MCF 10A (cell line): ENCODE measurements at regions of chr3 and their contacts with region 1.

Region 1: DNA sequence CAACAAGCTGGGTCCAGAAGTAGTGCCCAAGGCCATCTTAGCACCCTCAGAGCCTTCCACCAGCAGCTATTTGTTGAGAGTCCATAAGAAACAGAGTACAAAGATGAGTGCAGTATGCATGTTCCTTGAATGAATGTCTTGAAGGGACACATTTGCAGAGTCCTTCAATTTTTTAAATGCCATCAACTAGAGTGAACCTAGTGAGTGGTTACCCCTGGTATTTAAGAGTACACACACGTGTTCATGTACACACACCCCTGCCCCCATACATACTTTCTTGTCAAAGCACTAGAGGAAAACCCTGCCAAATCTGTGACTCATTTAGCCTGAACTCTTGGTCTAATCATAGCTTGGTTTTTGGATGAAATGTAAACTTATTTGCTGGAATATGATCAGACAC is 84.5 kb upstream of the GALNT15 start:
- DNase-seq: peak; percentile 92
- H3K4me3 Mint-ChIP-seq: no peak overlapping the region
- H3K27ac Mint-ChIP-seq: no peak overlapping the region
- H3K4me1 Mint-ChIP-seq: peaks cover 6% of the 10 kb centered on the region
- H3K27me3 Mint-ChIP-seq: no peaks in the 10 kb centered on the region
- CTCF ChIP-seq: no peak

Region 2: DNA sequence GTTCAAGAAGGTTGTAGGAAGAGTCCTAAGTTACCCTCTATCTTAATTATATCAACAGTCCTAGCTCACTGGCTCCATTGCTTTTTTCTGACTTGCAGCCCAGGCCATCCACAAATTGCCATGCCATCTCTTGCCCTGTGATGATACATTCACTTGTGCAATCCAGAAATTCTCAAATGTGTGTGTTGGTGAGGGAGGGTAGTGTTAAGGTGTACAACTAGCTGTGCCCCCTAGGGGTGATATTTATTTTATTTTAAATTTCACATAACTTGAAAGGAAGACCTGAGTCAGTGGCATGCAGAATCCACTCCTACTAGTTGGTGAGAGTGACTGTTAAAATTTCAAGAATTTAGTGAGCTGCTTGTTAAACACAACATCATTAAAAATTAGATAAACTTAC is 136.2 kb before region 1 on chr3:
- CTCF ChIA-PET with region 1: no interaction called
- POLR2A ChIA-PET with region 1: no interaction called
- intact Hi-C with region 1: no loop called
- DNase-seq: peak; percentile 65
- H3K4me3 Mint-ChIP-seq: no peak overlapping the region
- H3K27ac Mint-ChIP-seq: no peak overlapping the region
- H3K4me1 Mint-ChIP-seq: no peaks in the 10 kb centered on the region
- H3K27me3 Mint-ChIP-seq: no peaks in the 10 kb centered on the region
- CTCF ChIP-seq: no peak

Region 3: DNA sequence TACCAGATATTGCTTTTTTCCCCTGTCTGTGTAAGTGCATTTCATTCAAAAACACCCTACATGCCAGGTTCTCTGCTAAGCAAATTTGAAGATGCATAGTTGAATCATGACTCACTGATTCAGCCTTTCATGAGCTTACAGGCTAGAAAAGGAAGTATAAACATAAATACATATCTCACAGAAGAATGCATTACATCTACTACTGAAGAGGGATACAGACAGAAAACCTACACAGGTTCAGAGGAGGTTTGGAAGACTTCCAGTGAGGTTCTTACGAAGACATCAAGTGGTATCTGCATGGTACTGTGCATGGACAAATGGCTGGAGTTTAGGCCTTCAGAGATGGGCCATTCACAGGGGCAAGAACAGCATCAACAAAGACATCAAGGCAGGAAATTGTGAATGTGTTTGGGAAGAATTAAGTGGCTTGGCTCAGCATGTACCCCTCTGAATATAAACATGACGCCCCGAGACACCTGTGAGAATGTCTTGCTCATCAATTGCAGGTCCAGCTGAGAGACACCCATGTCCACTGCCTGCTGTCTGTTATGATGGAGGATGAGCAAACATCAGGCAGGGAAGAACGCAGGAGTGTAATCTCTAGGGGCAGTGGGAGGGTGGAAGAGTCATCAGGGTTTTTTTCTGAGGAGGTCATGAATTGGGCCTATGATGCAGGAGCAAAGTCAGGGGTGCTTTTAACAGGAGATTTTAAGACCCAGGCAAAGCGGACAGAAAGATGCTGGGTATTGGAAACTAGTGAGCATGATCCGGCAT is 20.7 kb before region 1 on chr3:
- CTCF ChIA-PET with region 1: interaction called, 4 read pairs
- POLR2A ChIA-PET with region 1: interaction called, 12 read pairs
- intact Hi-C with region 1: no loop called
- DNase-seq: peak; percentile 74
- H3K4me3 Mint-ChIP-seq: peak overlapping the region; percentile 10
- H3K27ac Mint-ChIP-seq: peak overlapping the region; percentile 85
- H3K4me1 Mint-ChIP-seq: peaks cover 62% of the 10 kb centered on the region
- H3K27me3 Mint-ChIP-seq: no peaks in the 10 kb centered on the region
- CTCF ChIP-seq: no peak